ENCODE measurements at regions of chr11 and their contacts with region 1.

Region 1: DNA sequence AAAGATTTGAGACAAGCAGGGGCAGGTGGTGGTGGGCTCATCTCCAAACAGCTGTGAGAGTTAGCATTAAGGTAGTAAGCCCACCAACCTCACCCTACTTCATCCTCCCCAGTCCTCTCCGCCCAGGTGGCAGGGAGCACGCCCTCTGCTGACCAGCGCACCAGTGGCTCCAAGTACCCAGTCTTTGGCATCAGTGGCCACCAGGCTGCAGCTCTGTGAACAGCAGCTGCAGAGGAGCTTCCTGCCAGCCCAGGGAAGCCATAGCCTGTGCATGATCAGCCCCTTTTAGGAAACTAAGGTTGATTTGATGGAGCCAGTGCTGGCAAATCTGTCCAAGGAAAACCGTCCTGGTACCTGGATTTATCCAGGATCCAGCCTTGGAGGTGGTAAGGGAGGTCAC is 21.7 kb downstream of the CAVIN3 start:
- DNase-seq: peak; percentile 32
- ATAC-seq: peak; percentile 71 to 75

Region 2: GRCh38 chr11:6022956-6023355 is 275.6 kb before region 1 on chr11:
- intact Hi-C with region 1: loop called in 1 of 2 experiments (anchors 10 kb)
- DNase-seq: no peak
- ATAC-seq: peak; percentile 74 to 76

Region 3: GRCh38 chr11:6251120-6251733 is 47.4 kb before region 1 on chr11:
- intact Hi-C with region 1: loop called in 1 of 2 experiments (anchors 5 kb)
- DNase-seq: peak; percentile 58
- ATAC-seq: peak; percentile 79 to 83

Region 4: GRCh38 chr11:6362873-6363678 is 64.5 kb after region 1 on chr11:
- intact Hi-C with region 1: loop called (anchors 2 to 10 kb)
- DNase-seq: peak; percentile 85
- ATAC-seq: peak; percentile 91 to 94

Measured in left cardiac atrium (tissue), 4 donors.